Heart right ventricle (tissue), 16 donors: ENCODE measurements at regions of chr14 and their contacts with region 1.

Region 1: GRCh38 chr14:71780075-71780474 is 152.2 kb upstream of the RGS6 start:
- DNase-seq: peak in 1 of 2 donors; percentile 52
- ATAC-seq: peak; percentile 68 to 93 (median 86)
- H3K4me3 ChIP-seq: no peak overlapping the region
- H3K27ac ChIP-seq: peak overlapping the region in 6 of 10 donors; percentile 3 to 63 (median 47)
- H3K4me1 ChIP-seq: peaks cover 0 to 39% (median 4%) of the 10 kb centered on the region in 9 donors
- H3K27me3 ChIP-seq: no peaks in the 10 kb centered on the region
- CTCF ChIP-seq: no peak

Region 2: GRCh38 chr14:71833476-71833875 is 53.4 kb after region 1 on chr14:
- intact Hi-C with region 1: loop called in 1 of 10 experiments (anchors 10 kb)
- DNase-seq: no peak
- ATAC-seq: no peak
- H3K4me3 ChIP-seq: no peak overlapping the region
- H3K27ac ChIP-seq: no peak overlapping the region
- H3K4me1 ChIP-seq: peaks cover 0 to 11% (median 3%) of the 10 kb centered on the region in 9 donors
- H3K27me3 ChIP-seq: no peaks in the 10 kb centered on the region
- CTCF ChIP-seq: no peak

Region 3: DNA sequence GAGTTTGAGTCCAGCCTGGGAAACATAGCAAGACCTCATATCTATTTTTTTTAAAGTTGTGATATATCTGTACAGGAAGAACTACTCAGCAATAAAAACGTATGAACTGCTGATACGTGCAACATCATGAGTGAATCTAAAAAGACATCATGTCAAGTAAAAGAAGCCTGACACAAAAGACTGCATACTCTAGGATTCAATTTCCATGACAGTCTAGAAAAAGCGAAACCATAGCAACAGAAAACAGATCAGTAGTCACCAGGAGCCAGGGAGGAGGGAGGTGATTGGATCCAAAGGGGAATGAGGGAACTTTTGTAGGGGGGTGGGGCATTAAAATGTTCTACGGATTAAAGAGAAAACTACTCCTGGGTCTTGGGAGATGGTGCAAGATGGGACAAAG is 143.4 kb after region 1 on chr14:
- intact Hi-C with region 1: no loop called
- DNase-seq: no peak
- ATAC-seq: no peak
- H3K4me3 ChIP-seq: no peak overlapping the region
- H3K27ac ChIP-seq: no peak overlapping the region
- H3K4me1 ChIP-seq: no peaks in the 10 kb centered on the region
- H3K27me3 ChIP-seq: peaks cover 0 to 3% (median 0%) of the 10 kb centered on the region in 7 donors
- CTCF ChIP-seq: no peak